BJ (cell line): ENCODE measurements at regions of chr11 and their contacts with region 1.

Region 1: GRCh38 chr11:121655537-121656327 is 203.0 kb upstream of the SORL1-AS1 start:
- DNase-seq: peak; percentile 91
- H3K4me3 ChIP-seq: peak overlapping the region; percentile 45
- H3K27me3 ChIP-seq: no peaks in the 10 kb centered on the region
- CTCF ChIP-seq: peak; percentile 97

Region 2: GRCh38 chr11:121591405-121592033 is 64.2 kb before region 1 on chr11:
- CTCF ChIA-PET with region 1: interaction called, 21 read pairs
- POLR2A ChIA-PET with region 1: no interaction called
- DNase-seq: peak; percentile 23
- H3K4me3 ChIP-seq: no peak overlapping the region
- H3K27me3 ChIP-seq: no peaks in the 10 kb centered on the region
- CTCF ChIP-seq: peak; percentile 82

Region 3: DNA sequence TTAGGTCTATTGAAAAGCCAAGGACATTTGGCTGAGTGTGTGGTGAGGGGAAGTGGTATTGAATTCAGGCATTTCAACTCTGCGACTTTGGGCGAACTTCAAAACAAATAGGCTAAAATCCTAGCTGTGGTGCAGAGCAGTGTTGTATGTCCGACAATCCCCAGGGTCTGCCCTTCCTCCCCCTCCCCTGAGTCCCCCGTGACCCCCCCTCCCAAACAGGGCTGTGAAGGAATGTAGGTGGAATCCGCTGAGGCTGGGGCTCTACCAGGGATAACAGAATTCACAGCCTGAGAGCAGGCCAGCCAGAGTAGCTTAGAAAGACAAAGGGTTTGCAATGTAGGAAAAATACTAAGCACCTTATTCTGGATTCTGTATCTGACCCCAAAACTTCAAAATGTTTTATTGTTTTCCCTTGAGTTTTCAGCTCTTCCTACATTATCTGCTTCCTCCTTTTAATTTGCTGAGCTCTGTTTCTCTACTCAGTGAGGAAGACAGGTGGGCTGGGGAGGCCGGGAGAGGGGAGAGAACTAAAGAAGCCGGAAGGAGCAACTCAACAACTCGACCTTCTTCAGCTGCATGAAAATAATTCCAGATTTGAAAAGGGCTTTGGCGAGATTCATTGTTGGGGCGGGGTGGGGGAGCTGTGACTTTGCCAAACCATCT is 145.1 kb after region 1 on chr11:
- CTCF ChIA-PET with region 1: no interaction called
- POLR2A ChIA-PET with region 1: no interaction called
- DNase-seq: no peak
- H3K4me3 ChIP-seq: no peak overlapping the region
- H3K27me3 ChIP-seq: no peaks in the 10 kb centered on the region
- CTCF ChIP-seq: no peak

Region 4: GRCh38 chr11:122036018-122036417 is 380.3 kb after region 1 on chr11:
- CTCF ChIA-PET with region 1: interaction called, 15 read pairs
- POLR2A ChIA-PET with region 1: no interaction called
- DNase-seq: peak; percentile 85
- H3K4me3 ChIP-seq: no peak overlapping the region
- H3K27me3 ChIP-seq: no peaks in the 10 kb centered on the region
- CTCF ChIP-seq: no peak